Cardiac septum (tissue), 1 donor: ENCODE measurements at regions of chr7 and their contacts with region 1.

Region 1: DNA sequence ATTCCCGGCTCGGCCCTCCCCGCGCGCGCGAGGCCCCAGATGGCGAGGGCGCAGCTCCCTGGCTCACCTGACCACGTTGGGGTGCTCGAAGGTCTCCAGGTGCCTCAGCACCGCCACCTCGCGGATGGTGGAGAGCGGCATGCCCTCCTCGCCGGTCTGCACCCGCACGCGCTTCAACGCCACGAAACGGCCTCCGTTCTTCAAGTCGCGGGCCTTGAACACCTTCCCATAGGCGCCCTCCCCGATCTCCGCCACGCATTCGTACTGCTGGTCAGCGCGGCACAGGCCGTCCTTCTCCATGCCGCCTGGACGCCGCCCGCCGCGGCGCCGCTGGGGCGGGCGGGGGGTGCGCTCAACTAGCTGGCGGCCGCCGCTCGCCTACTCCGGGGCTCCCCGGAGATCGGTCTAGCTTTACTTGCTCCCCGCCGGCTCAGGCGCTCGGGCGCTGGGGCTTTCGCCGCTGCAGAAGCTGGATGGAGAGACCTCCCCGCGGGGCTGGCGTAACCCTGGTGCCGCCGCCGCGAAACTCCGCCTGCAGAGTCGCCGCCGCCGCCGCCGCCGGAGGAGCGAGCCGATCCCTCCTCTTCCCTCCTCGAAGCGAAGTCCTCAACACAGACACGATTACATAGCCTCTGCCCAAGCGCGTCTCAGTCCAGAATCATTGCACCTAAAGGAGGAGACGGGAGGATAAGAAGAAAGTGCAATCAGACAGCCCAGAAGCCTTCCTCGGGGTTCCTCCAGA is 3.2 kb downstream of the CDK6 start:
- DNase-seq: peak; percentile 95

Region 2: DNA sequence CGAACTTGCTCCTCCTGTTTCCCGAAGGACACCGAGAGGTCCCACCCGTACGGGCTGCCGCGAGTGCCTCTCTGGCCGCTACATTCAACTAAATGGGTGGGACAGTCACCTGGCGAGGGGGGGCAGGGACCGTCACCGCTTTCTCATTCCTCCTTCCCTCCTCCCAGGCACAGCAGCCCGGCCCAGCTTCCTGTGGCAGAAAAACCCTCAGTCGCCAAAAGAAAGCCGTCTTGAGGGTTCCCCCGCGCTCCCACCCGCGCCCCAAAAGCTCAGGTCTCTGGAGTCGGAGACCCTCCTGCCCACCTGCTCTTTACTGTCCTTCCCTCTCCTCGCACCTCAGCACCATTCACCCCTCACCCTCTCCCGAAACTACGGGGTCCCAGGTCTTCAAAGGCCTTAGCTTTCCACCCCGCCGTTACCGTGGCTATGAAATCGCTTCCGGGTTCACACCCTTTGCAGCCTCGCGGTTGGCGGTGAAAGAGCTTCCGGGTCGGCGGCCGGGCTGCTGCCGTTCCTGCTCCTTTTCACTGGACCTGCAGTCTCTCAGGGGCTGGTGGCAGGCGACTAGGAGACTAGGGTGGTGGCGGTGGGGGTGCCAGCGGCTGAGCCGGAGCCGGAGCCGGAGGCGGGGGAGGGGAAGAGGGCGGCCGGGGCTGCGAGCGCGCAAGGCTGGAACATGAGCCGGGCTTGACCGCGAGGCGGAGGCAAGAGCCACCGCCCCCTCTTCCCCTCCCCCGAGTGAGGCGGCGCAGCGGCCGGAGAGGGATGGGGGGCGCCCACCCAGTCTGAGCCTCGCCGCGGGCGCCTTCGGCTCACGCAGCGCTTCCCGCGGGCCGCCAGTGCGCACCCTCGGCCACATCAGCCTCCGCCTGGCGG is 587.5 kb before region 1 on chr7 and contains the starts of genes ANKIB1 and KRIT1:
- intact Hi-C with region 1: loop called (anchors 10 kb)
- DNase-seq: peak; percentile 95
- total RNA-seq, gene ANKIB1: 59.4 TPM
- total RNA-seq, gene KRIT1: 29.3 TPM

Region 3: GRCh38 chr7:92621026-92621540 is 212.1 kb before region 1 on chr7:
- intact Hi-C with region 1: loop called (anchors 1 kb)
- DNase-seq: no peak

Region 4: GRCh38 chr7:92691578-92691977 is 141.6 kb before region 1 on chr7:
- intact Hi-C with region 1: loop called (anchors 1 kb)
- DNase-seq: no peak

Region 5: GRCh38 chr7:92717993-92718716 is 115.0 kb before region 1 on chr7:
- intact Hi-C with region 1: loop called (anchors 5 kb)
- DNase-seq: no peak

Region 6: DNA sequence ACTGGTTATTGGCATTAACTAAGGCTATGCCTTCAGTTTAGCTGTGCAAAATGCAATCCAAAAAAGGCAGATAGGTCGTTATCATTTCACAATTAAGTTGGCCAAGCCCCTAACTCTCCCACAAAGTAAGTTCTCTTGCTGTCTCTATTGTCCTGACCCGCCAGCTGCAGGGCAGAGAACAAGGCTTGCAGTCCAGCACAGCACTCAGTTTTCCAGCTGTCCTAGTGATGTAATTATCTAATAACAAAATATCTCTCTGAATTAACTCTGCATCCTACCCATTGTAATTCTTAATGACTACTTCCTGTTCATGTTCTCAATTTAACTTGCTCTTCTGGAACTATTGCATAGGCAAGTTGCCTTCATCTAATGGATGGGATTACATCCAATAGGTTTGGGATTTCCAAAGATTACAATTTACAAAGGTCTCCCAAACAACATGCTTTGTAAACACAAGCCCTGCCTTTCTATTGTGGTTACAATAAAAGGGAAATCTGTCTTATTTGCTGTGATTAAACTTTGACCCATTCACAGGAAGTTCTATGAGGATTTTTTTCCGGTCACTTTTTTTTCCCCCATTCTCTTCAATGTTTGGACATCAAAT is 52.0 kb before region 1 on chr7:
- intact Hi-C with region 1: loop called (anchors 10 kb)
- DNase-seq: no peak

Region 7: DNA sequence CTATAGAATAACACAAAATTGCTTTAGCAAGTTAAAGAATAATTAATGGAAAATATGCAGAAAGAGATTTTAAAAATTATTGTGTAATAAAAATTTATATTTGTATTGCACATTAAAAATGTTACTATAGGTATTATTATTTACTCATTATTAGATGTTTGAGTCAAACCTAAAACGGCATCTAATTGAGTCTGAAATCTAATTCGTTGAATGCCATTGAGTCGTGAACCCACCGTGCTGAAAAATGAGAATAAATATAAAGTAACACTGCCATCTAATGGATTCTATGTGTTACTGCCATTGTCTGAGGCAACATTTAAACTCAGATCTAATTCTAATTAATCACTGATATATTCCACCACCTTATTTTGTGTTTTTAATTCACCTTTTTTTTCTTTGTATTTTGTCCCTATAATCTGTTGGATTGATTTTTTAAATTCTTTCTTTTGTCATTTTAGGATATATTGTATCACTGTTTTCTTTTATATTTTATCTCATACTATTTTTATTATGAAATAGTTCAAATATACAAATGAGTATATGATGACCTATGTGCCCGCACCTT is 222.4 kb after region 1 on chr7:
- intact Hi-C with region 1: loop called (anchors 10 kb)
- DNase-seq: no peak

Region 8: DNA sequence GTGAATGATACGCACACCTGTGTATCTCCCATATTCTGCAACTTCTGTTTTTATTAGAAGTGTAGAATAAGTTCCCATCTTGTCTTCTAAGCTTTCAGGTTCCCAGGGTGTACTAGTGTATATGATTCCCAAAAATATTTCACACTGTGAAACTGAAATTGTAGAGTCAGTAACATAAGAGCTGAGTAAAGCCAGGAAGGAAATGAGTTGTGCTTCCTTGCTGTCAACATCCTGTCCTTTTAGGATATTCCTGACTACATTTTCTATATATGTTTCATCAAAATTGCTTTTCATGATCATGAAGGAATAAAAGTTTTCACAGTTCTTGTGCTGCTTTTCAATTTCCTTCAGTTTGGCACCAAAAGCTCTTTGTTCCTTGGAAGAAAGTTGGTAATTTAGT is 299.8 kb after region 1 on chr7:
- intact Hi-C with region 1: no loop called
- DNase-seq: no peak